OCI-LY7 (cell line): ENCODE measurements at regions of chr19 and their contacts with region 1.

Region 1: DNA sequence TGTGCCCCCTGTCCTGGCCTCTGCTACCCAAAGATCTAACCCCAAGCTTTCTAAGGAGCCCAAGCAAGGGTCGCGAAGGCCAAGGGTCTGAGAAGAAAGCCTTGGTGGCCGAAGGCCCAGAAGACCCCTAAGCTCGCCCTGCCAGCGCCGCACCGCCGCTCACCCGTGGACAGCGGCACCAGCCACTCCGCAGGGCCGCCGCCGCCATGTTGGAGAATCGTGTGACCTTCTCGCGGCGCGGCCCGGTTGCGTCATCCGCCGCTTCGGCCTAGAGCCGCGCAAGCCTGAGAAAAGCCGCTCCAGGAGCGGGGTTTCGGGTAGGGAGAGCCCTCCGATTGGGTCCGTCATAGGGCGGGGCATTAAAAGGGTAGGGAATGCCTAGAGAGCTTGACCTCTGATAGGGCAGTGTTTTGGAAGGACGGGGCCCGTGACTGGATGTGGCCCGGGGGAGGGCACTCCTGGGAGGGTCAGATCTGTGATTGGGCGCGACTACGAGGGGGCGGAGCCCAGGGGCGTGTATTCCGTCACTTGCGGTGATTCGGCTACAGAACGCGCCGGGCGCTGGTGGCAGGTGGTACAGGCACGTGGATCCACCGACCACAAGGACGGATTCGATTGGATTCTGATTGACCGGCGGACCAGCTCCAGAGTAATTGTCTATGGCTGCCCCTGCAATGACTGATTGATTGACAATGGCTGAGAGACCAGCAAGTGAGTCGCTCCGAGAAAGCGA is at the start of gene TIMM44:
- DNase-seq: peak; percentile 100
- H3K4me3 ChIP-seq: peak within 1 kb of the TSS; percentile 94
- H3K27ac ChIP-seq: peak within 1 kb of the TSS; percentile 69
- H3K4me1 ChIP-seq: peaks cover 18% of the 10 kb centered on the region
- CTCF ChIP-seq: no peak
- total RNA-seq, gene TIMM44: 86.0 and 89.0 TPM in 2 replicates

Region 2: DNA sequence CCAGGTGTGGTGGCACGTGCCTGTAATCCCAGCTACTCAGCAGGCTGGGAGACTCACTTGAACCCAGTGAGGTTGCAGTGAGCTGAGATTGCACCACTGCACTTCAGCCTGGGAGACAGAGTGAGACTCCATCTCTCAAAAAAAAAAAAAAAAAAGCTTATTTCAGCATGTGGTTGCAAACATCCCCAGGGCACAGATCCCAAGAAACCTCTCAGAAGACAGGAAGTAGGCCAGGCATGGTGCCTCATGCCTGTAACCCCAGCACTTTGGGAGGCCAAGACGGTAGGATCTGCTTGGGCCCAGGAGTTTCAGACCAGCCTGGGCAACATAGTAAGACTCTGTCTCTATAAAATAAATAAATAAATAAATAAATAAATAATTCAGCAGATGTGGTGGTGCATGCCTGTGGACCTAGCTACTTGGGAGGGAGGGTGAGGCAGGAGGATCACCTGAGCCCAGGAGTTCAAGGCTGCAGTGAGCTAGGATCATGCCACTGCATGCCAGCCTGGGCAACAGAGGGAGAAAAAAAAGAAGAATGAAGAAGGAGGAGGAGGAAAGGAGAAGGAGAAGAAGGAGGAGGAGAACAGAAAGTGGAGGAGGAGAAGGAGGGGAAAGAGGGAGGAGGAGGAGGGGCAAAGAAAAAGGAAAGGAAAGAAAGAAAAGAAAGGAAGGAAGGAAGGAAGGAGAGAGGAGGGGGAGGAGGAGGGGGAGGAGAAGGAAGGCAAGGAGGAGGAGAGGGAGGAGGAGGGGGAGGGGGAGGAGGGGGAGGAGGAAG is 59.6 kb before region 1 on chr19:
- CTCF ChIA-PET with region 1: no interaction called
- POLR2A ChIA-PET with region 1: no interaction called
- intact Hi-C with region 1: no loop called
- DNase-seq: no peak
- H3K4me3 ChIP-seq: no peak overlapping the region
- H3K27ac ChIP-seq: no peak overlapping the region
- H3K4me1 ChIP-seq: no peaks in the 10 kb centered on the region
- CTCF ChIP-seq: no peak

Region 3: DNA sequence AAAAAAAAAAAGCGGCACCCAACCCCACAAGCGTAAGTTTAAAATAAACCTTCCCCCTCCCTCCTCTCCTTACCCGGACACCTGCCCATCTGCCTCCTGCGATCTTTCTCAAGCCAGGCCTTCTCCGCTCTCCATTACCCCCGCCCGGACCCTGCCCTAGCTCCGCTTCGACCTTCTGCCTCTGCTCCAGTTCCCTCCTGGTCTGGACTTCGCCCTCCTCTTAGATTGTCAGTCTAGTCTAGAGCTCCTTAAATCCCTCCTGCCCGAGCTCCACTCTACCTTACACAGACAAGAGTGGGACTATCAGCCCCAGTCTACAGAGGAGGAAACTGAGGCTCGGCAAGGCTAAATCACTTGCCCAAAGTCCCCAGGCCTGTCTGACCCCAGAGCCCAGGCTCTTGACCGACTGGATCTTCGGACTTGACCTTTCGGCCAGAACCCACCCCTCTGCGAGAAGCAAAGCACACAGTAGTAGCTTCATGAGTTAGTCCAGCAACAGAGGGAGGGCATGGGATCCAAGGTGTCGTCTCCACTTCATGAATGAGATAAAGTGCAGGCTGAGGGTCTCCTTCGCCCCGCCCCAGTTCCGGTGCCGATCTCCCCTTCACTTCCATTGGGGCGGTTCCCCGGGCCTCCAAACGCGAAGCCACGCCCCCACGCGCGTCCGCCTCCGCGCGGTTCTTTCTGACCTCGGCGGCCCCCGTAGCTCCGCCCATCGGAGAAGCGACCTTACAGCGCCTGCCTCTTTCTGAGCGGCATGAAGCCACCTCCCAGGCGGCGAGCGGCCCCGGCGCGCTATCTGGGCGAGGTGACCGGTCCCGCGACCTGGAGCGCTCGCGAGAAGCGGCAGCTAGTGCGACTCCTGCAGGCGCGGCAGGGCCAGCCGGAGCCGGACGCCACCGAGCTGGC is 23.7 kb before region 1 on chr19 and contains the start of gene SNAPC2:
- CTCF ChIA-PET with region 1: interaction called, 15 read pairs
- POLR2A ChIA-PET with region 1: interaction called, 12 read pairs
- intact Hi-C with region 1: loop called (anchors 2 kb)
- DNase-seq: peak; percentile 96
- H3K4me3 ChIP-seq: peak within 1 kb of the TSS; percentile 73
- H3K27ac ChIP-seq: peak within 1 kb of the TSS; percentile 59
- H3K4me1 ChIP-seq: peaks cover 16% of the 10 kb centered on the region
- CTCF ChIP-seq: no peak
- total RNA-seq, gene SNAPC2: 4.9 and 21.6 TPM in 2 replicates

Region 4: GRCh38 chr19:8095903-8096470 is 152.4 kb after region 1 on chr19:
- CTCF ChIA-PET with region 1: no interaction called
- POLR2A ChIA-PET with region 1: no interaction called
- intact Hi-C with region 1: loop called (anchors 1 kb)
- DNase-seq: peak; percentile 8
- H3K4me3 ChIP-seq: no peak overlapping the region
- H3K27ac ChIP-seq: no peak overlapping the region
- H3K4me1 ChIP-seq: no peaks in the 10 kb centered on the region
- CTCF ChIP-seq: peak; percentile 64; the same call in 1 of the 2 replicates

Region 5: DNA sequence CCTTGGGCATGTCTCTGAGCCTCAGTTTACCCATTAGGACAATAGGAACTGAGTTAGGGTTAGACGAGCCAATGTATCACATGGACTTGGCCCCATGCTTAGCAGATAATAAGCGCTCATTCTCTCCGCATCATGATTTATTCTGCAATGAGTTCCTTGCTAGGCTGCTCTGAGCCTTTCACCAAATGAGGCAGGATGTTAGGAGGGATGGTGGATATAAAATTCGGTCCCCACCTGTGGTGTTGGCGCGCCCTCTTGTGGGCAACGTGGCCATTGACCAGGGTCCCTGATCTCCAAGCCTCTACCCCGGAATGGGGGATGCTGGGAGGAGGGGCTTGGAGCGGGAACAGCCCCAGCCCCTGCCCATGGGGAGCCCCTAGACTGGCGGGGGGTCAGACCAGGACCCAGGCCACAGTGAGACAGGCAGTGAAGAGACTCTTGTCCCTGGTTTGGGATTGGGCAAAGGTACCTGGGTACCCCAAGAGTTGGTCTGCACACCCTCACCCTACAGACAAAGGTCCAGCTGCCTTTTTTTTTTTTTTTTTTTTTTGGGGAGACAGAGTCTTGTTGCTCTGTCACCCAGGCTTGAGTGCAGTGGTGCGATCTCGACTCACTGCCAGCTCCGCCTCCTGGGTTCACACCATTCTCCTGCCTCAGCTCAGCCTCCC is 309.4 kb after region 1 on chr19:
- CTCF ChIA-PET with region 1: no interaction called
- POLR2A ChIA-PET with region 1: no interaction called
- intact Hi-C with region 1: loop called (anchors 1 kb)
- DNase-seq: peak; percentile 84
- H3K4me3 ChIP-seq: no peak overlapping the region
- H3K27ac ChIP-seq: no peak overlapping the region
- H3K4me1 ChIP-seq: no peaks in the 10 kb centered on the region
- CTCF ChIP-seq: peak; percentile 97